ENCODE measurements at regions of chr16 and their contacts with region 1.

Region 1: GRCh38 chr16:81095953-81096717 is at the start of gene GCSH:
- DNase-seq: peak; percentile 97 to 99
- H3K4me3 ChIP-seq: peak within 1 kb of the TSS; percentile 90 to 99
- H3K27ac ChIP-seq: peak within 1 kb of the TSS; percentile 78 to 84
- H3K4me1 ChIP-seq: no peaks in the 10 kb centered on the region
- H3K27me3 ChIP-seq: no peaks in the 10 kb centered on the region
- CTCF ChIP-seq: no peak
- total RNA-seq, gene GCSH: 5.0 TPM

Region 2: GRCh38 chr16:80899809-80900592 is 196.1 kb before region 1 on chr16:
- intact Hi-C with region 1: loop called (anchors 10 kb)
- DNase-seq: peak; percentile 77 to 96
- H3K4me3 ChIP-seq: peak overlapping the region in 1 of 2 donors; percentile 38
- H3K27ac ChIP-seq: peak overlapping the region; percentile 76 to 77
- H3K4me1 ChIP-seq: peaks cover 9% of the 10 kb centered on the region in 2 donors
- H3K27me3 ChIP-seq: no peaks in the 10 kb centered on the region
- CTCF ChIP-seq: no peak

Region 3: GRCh38 chr16:80915079-80915450 is 181.1 kb before region 1 on chr16:
- intact Hi-C with region 1: no loop called
- DNase-seq: no peak
- H3K4me3 ChIP-seq: no peak overlapping the region
- H3K27ac ChIP-seq: no peak overlapping the region
- H3K4me1 ChIP-seq: no peaks in the 10 kb centered on the region
- H3K27me3 ChIP-seq: no peaks in the 10 kb centered on the region
- CTCF ChIP-seq: no peak

Region 4: DNA sequence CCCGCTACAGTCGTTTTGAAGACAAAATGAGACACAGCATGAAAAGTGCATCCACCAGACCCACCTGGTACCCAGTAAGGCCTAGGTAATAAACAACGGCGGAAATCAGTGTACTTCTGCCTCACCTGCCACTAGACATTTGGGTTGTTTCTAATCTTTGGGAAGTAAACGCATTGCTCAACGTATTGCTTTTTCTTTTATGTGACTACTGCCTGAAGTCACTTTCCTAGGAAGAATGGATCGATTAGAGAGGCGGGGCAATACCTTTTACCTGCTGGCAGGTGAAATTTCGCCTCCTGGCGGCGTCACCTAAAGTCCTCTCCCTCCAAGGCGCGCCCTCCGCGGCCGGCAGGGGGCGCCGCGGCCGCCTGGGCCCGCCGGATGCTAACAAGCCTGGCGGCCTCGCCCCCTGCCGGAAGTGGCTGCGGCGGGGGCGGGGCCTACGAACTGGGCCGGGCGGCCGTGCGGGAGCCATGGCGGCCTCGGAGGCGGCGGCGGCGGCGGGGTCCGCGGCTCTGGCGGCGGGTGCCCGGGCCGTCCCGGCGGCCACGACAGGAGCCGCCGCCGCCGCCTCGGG is 60.6 kb before region 1 on chr16 and contains the start of gene ATMIN:
- intact Hi-C with region 1: loop called (anchors 1 kb)
- DNase-seq: peak; percentile 25 to 90
- H3K4me3 ChIP-seq: peak within 1 kb of the TSS; percentile 90 to 93
- H3K27ac ChIP-seq: peak within 1 kb of the TSS in 1 of 2 donors; percentile 52
- H3K4me1 ChIP-seq: peaks cover 0 to 9% of the 10 kb centered on the region in 2 donors
- H3K27me3 ChIP-seq: no peaks in the 10 kb centered on the region
- CTCF ChIP-seq: peak; percentile 90 to 97 (median 90)
- total RNA-seq, gene ATMIN: 11.9 TPM

Region 5: DNA sequence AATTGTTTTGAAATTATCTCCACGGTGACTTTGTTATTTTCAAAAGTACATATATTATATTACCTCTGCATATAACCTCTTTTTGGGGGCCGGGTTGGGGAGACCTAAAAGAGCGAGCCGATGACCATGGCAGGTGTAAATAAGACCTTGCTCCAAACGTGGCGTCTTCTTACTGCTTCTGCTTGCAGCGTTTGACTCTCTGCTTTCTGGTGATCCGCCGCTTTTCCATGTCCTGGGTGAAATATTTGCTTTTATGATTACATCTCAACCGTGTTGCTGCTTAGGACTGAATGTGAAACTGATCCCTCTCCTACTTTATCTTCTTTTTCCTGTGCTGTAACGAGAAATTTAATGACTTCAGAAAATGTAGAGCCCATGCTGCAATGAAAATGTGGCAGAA is 42.4 kb before region 1 on chr16:
- intact Hi-C with region 1: no loop called
- DNase-seq: no peak
- H3K4me3 ChIP-seq: no peak overlapping the region
- H3K27ac ChIP-seq: no peak overlapping the region
- H3K4me1 ChIP-seq: no peaks in the 10 kb centered on the region
- H3K27me3 ChIP-seq: no peaks in the 10 kb centered on the region
- CTCF ChIP-seq: no peak

Region 6: DNA sequence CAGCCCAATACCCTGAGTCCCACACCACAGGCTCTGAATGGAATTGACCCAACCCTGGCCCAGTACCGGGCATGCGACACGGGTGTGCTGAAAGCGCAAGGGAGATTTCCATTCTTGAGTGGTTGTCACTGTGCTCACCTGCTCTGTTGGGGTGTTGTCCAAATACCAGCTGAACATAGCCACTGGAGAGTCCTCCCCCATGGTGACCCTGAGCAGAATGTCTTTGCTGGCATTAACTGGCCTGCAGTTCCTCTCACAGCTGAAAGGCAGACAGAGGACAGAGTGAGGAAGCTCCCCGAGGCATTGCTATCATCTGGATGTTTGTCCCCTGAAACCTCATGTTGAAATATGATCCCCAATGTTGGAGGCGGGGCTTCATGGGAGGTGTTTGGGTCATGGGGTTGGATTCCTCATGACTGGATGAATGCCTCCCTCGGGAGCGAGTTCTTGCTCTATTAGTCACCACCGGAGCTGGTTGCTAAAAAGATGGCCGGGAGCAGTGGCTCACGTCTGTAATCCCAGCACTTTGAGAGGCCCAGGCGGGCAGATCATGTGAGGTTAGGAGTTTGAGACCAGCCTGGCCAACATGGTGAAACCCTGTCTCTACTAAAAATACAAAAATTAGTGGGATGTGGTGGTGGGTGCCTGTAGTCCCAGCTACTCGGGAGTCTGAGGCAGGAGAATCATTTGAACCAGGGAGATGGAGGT is 85.0 kb after region 1 on chr16:
- intact Hi-C with region 1: loop called (anchors 1 kb)
- DNase-seq: peak; percentile 48 to 92
- H3K4me3 ChIP-seq: no peak overlapping the region
- H3K27ac ChIP-seq: peak overlapping the region; percentile 69 to 79
- H3K4me1 ChIP-seq: peaks cover 0 to 10% of the 10 kb centered on the region in 2 donors
- H3K27me3 ChIP-seq: no peaks in the 10 kb centered on the region
- CTCF ChIP-seq: no peak

Measured in ascending aorta (tissue), 2 donors.